Kidney (tissue), 22 donors: ENCODE measurements at regions of chr4 and their contacts with region 1.

Region 1: DNA sequence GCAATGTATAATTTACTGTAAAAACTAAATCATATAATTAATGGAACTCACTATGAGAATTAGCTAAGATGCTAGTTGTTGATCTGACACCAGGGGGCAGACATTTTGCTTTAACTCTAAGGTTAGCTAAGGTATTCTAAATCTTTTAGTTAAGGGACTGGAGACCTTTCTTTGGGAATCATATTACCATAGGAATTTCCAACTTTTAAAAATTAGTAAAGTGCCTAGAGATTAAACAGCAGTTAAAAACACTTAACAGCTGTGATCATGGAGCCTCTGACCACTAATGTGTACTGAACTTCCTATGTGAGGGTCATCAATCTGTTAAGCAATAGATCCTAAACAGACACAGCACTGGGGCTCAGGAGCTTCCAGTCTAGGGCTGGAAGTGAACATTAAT is 226.6 kb downstream of the NSUN7 start:
- DNase-seq: peak in 3 of 5 donors; percentile 32 to 85 (median 83)
- H3K4me3 ChIP-seq: no peak overlapping the region
- H3K27ac ChIP-seq: no peak overlapping the region
- H3K4me1 ChIP-seq: no peaks in the 10 kb centered on the region
- H3K27me3 ChIP-seq: no peaks in the 10 kb centered on the region
- CTCF ChIP-seq: peak; percentile 66

Region 2: GRCh38 chr4:40848940-40849339 is 127.4 kb before region 1 on chr4:
- intact Hi-C with region 1: no loop called
- DNase-seq: no peak
- H3K4me3 ChIP-seq: no peak overlapping the region
- H3K27ac ChIP-seq: no peak overlapping the region
- H3K4me1 ChIP-seq: peaks cover 0 to 4% (median 0%) of the 10 kb centered on the region in 3 donors
- H3K27me3 ChIP-seq: no peaks in the 10 kb centered on the region
- CTCF ChIP-seq: no peak

Region 3: GRCh38 chr4:40933272-40934053 is 42.9 kb before region 1 on chr4:
- intact Hi-C with region 1: loop called (anchors 10 kb)
- DNase-seq: no peak
- H3K4me3 ChIP-seq: no peak overlapping the region
- H3K27ac ChIP-seq: no peak overlapping the region
- H3K4me1 ChIP-seq: peaks cover 0 to 3% (median 0%) of the 10 kb centered on the region in 3 donors
- H3K27me3 ChIP-seq: no peaks in the 10 kb centered on the region
- CTCF ChIP-seq: no peak

Region 4: DNA sequence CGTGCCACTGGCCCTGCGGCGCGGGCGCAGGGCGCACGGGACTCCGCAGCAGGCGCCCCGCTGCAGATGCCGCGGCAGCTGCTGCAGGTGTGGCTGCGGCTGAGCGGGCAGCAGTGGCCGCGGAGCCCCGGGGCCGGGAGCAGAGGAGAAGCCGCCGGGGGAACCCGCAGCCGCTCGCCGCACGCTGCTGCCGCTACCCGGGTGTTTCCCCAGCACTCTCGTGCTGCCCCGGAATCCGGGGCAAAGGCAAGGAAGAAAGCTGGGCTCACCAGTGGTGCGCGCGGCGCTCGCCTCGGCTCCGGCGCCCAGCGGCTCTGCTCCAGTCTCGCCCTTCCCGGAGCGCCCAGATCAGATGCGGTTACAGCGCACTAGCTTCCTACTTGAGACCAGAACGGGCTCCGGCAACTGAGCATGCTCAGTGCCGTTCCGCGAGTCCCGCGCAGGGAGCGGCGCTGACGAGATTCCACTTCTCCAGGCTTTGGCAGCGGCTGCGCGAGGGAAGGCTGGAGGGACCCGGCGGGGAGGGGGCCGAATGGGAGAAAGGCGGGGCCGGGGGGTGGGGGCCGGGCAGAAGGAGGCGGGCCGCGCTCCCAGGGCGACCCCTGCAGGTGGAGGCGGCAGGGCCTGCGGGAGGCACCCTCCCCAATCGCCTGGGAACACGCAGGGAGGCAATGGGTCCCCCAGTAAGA is 237.9 kb after region 1 on chr4 and contains the start of gene APBB2:
- intact Hi-C with region 1: loop called (anchors 5 kb)
- DNase-seq: peak; percentile 98 to 99 (median 98)
- H3K4me3 ChIP-seq: peak within 1 kb of the TSS; percentile 90 to 92 (median 90)
- H3K27ac ChIP-seq: peak within 1 kb of the TSS; percentile 72 to 81
- H3K4me1 ChIP-seq: peaks cover 0 to 15% (median 14%) of the 10 kb centered on the region in 3 donors
- H3K27me3 ChIP-seq: no peaks in the 10 kb centered on the region
- CTCF ChIP-seq: peak; percentile 78
- total RNA-seq, gene APBB2: 65.6 TPM

Region 5: GRCh38 chr4:41241919-41242318 is 265.6 kb after region 1 on chr4:
- intact Hi-C with region 1: no loop called
- DNase-seq: no peak
- H3K4me3 ChIP-seq: no peak overlapping the region
- H3K27ac ChIP-seq: peak overlapping the region in 1 of 2 donors; percentile 49
- H3K4me1 ChIP-seq: peaks cover 0 to 2% (median 0%) of the 10 kb centered on the region in 3 donors
- H3K27me3 ChIP-seq: no peaks in the 10 kb centered on the region
- CTCF ChIP-seq: no peak

Region 6: GRCh38 chr4:41991916-41992767 is 1015.8 kb after region 1 on chr4:
- intact Hi-C with region 1: no loop called
- DNase-seq: no peak
- H3K4me3 ChIP-seq: peak overlapping the region in 2 of 3 donors; percentile 86 to 95
- H3K27ac ChIP-seq: no peak overlapping the region
- H3K4me1 ChIP-seq: peaks cover 3 to 21% (median 8%) of the 10 kb centered on the region in 3 donors
- H3K27me3 ChIP-seq: no peaks in the 10 kb centered on the region
- CTCF ChIP-seq: no peak